HepG2 (cell line): ENCODE measurements at regions of chr21 and their contacts with region 1.

Region 1: DNA sequence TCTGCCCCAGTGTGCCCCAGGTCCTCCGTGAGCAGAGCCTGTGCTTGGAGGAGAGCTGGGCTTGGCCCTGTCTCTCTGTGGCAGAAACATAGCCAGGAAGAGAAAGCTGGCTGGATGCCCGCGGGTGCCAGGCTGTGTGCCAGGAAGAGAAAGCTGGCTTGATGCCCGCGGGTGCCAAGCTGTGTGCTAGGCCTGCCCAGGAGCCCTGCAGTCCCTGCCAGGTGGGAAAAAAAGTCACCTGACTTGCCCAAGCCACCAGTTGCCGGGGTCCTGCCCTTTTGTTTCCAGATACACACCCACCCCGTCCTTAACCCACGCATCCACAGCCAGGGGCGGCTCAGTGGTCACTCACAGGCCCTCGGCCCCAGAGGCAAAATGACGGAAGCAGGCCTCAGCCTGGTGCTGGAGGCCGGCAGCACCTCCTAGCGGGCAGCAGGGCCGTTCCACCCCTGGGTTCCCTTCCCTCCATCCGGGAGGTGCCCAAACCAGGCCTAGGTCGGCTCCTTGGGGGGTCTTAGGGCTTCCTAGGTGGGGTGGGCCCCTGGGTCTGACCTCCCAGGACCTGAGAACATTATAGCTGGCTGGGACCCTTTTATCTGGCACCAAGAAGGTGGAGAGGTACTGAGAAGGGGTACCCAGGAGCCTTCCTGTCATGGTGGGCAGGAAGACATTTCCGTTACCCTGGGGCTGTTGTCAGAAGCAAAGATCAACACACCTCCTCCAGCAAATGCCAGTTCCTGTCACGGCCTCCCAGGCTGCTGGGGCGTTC is 9.1 kb downstream of the ITGB2 start:
- DNase-seq: peak; percentile 46
- ATAC-seq: peak; percentile 62
- H3K4me3 ChIP-seq: peak overlapping the region; percentile 58 to 80 (median 65)
- H3K27ac ChIP-seq: peak overlapping the region; percentile 94
- H3K4me1 ChIP-seq: peaks cover 92% of the 10 kb centered on the region
- H3K27me3 ChIP-seq: no peaks in the 10 kb centered on the region
- CTCF ChIP-seq: peak; percentile 96
- EP300 ChIP-seq: no peak
- POLR2A ChIP-seq: no peak
- RAD21 ChIP-seq: peak; percentile 89

Region 2: DNA sequence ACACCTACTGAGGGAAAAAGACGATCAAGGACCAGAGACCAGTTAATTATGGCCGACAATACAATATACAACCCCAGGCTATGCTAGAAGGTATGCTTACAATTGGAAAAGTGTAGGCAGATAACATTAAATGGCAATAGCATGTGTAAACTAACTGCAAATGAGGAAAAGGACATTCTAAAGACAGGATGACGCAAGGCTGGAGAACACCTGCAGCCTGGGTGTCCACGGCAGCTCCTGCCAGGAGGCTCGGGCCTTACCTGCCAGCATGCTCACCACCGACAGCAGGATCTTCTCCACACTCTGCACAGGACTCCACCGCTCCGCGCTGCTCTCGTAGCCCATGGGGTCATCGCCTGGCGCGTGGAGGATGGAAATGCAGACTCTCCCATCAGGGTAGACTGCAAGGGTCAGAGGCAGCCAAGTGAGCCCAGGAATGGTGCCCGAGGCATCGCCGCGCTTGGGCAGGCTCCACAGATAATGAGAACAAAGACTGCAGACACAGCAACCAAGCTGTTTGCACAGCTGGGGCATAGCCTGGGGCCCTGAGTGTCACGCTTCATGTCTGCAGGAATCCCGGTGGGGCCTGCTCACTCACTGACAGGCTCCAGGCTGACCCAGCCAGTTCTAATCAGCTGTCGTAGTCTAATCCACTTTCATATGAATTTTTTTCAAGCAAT is 138.1 kb before region 1 on chr21:
- CTCF ChIA-PET with region 1: no interaction called
- POLR2A ChIA-PET with region 1: no interaction called
- in situ Hi-C with region 1: no loop called
- intact Hi-C with region 1: no loop called
- DNase-seq: no peak
- ATAC-seq: no peak
- H3K4me3 ChIP-seq: no peak overlapping the region
- H3K27ac ChIP-seq: no peak overlapping the region
- H3K4me1 ChIP-seq: peaks cover 5% of the 10 kb centered on the region
- H3K27me3 ChIP-seq: no peaks in the 10 kb centered on the region
- CTCF ChIP-seq: no peak
- EP300 ChIP-seq: no peak
- POLR2A ChIP-seq: no peak
- RAD21 ChIP-seq: no peak

Region 3: DNA sequence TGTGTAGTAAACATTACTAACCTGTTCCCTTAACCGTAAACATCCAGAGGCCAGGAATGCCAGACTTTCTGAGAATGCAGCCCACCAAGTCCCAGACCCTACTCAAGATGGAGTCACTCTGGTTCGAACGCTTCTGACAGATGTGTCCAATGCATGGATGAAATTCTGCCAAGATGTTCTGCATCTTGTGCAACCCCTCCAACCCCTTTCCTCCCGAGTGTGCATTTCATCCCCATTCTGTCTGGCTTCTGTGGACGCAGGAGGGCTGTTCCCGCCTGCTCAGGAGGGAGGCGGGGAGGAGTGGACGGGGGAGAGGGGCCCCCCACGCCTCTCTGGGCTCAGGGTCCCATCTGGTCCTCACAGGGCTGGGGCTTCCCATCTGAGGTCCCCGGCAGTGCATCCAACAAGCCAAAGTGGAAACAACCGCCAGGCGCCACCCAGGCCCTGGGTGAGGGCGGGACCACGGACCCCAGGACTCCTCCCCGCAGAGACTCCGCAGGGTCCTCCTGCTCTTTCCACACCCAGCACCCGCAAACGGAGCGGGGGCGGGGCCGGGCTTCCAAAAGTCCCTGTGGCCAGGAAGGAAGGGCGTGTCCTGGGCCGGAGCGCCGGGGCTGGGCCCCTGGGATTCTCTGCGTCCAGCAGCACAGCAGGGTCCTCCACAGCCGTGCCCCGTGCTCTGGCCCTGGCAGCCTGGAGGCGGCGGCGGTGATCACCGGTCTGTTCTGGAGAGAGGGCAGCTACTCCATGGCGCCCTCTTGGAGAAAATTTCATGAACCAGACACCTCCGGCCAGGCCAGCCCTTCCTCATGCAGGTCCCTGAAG is 66.0 kb before region 1 on chr21:
- CTCF ChIA-PET with region 1: no interaction called
- POLR2A ChIA-PET with region 1: no interaction called
- in situ Hi-C with region 1: loop called (anchors 5 kb)
- intact Hi-C with region 1: loop called (anchors 10 kb)
- DNase-seq: peak; percentile 76
- ATAC-seq: peak; percentile 77
- H3K4me3 ChIP-seq: peak overlapping the region; percentile 43 to 67 (median 58)
- H3K27ac ChIP-seq: no peak overlapping the region
- H3K4me1 ChIP-seq: peaks cover 52% of the 10 kb centered on the region
- H3K27me3 ChIP-seq: peaks cover 1 to 37% of the 10 kb centered on the region in 2 experiments; a peak in 4 of 5 replicates
- CTCF ChIP-seq: peak; percentile 54
- EP300 ChIP-seq: 0 out of 4 replicates have a peak, but pooled peaks of 1 of the 2 experiments have one; percentile 4
- POLR2A ChIP-seq: no peak
- RAD21 ChIP-seq: 0 out of 2 replicates have a peak, but pooled peaks have one; percentile 24

Region 4: GRCh38 chr21:44880762-44881585 is 30.6 kb before region 1 on chr21:
- CTCF ChIA-PET with region 1: no interaction called
- POLR2A ChIA-PET with region 1: interaction called, 38 read pairs
- in situ Hi-C with region 1: no loop called
- intact Hi-C with region 1: no loop called
- DNase-seq: peak; percentile 70
- ATAC-seq: peak; percentile 33
- H3K4me3 ChIP-seq: peak overlapping the region in 1 of 3 experiments; percentile 2; a peak in 1 of 6 replicates
- H3K27ac ChIP-seq: peak overlapping the region; percentile 99
- H3K4me1 ChIP-seq: peaks cover 86% of the 10 kb centered on the region
- H3K27me3 ChIP-seq: no peaks in the 10 kb centered on the region
- CTCF ChIP-seq: no peak
- EP300 ChIP-seq: 0 out of 4 replicates have a peak, but pooled peaks of 1 of the 2 experiments have one; percentile 4
- POLR2A ChIP-seq: no peak
- RAD21 ChIP-seq: no peak

Region 5: GRCh38 chr21:44927587-44928461 is 16.3 kb after region 1 on chr21:
- CTCF ChIA-PET with region 1: no interaction called
- POLR2A ChIA-PET with region 1: interaction called, 37 read pairs
- in situ Hi-C with region 1: no loop called
- intact Hi-C with region 1: no loop called
- DNase-seq: peak; percentile 39
- ATAC-seq: peak; percentile 48
- H3K4me3 ChIP-seq: peak overlapping the region; percentile 24 to 66 (median 49); a peak in 5 of 6 replicates
- H3K27ac ChIP-seq: no peak overlapping the region
- H3K4me1 ChIP-seq: peaks cover 67% of the 10 kb centered on the region
- H3K27me3 ChIP-seq: peaks cover 1 to 4% of the 10 kb centered on the region in 2 experiments; a peak in 3 of 5 replicates
- CTCF ChIP-seq: no peak
- EP300 ChIP-seq: peak in 1 of 2 experiments; percentile 31; a peak in 1 of 4 replicates
- POLR2A ChIP-seq: no peak
- RAD21 ChIP-seq: no peak

Region 6: GRCh38 chr21:44958471-44959191 is 47.1 kb after region 1 on chr21:
- CTCF ChIA-PET with region 1: no interaction called
- POLR2A ChIA-PET with region 1: no interaction called
- in situ Hi-C with region 1: no loop called
- intact Hi-C with region 1: no loop called
- DNase-seq: no peak
- ATAC-seq: peak; percentile 22; the same call in 2 of the 3 replicates
- H3K4me3 ChIP-seq: no peak overlapping the region
- H3K27ac ChIP-seq: no peak overlapping the region
- H3K4me1 ChIP-seq: no peaks in the 10 kb centered on the region
- H3K27me3 ChIP-seq: no peaks in the 10 kb centered on the region
- CTCF ChIP-seq: no peak
- EP300 ChIP-seq: no peak
- POLR2A ChIP-seq: no peak
- RAD21 ChIP-seq: no peak

Region 7: DNA sequence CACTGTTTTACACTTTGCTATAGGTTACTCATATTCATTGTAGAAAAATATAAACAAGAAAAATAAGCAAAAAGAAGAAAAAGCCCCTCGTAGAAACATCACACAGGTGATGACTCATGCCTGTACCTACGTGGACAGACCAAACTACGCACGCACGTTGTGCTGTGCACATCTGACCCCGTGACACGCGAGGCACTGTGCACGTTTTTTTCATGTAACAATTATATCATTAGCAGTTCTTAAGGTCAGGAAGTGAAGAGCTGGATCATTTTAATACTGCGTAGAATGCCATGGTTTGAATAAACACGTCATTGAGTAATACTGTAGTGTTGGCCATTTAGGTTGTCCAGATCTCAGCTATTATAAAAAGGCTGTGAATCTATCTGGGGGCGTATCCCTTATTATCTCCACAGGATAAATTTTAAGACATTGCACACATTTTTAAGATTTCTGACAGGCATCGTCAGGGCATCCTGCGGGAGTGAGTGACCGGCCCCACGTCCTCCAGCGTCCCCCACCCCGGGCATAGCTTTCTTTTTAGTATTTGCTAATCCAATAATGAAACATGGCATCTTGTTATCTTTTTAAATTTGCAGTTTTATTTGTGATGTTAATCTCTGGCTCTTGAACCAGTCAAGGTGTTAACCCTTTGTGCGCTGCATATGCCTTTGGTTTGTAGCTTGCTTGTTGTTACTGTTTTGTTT is 139.4 kb after region 1 on chr21:
- CTCF ChIA-PET with region 1: no interaction called
- POLR2A ChIA-PET with region 1: no interaction called
- in situ Hi-C with region 1: no loop called
- intact Hi-C with region 1: no loop called
- DNase-seq: no peak
- ATAC-seq: no peak
- H3K4me3 ChIP-seq: no peak overlapping the region
- H3K27ac ChIP-seq: no peak overlapping the region
- H3K4me1 ChIP-seq: peaks cover 32% of the 10 kb centered on the region
- H3K27me3 ChIP-seq: peaks cover 7 to 44% of the 10 kb centered on the region in 2 experiments; a peak in 3 of 5 replicates
- CTCF ChIP-seq: no peak
- EP300 ChIP-seq: no peak
- POLR2A ChIP-seq: no peak
- RAD21 ChIP-seq: no peak